ENCODE measurements at regions of chr10 and their contacts with region 1.

Region 1: DNA sequence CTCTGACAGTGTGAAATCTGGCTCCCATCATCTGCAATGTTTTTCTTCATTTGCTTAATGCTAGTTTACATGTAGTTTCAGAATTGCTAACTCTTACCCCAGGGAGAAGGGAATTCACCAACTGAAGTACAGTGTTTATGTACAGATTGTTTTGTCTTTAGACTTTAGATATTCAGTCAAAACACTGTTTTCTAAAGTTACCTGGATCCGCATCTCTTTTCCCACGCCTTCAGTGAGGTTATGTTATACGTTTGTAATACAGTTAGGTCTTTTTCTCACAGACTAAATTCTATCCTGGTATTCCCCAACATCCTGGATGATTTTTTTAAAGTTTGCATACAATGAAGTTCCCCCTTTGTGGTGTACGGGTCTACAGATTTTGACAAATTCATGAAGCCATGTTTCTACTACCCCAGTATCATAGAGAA is 3.2 kb upstream of the LYZL1 start:
- DNase-seq: no peak
- ATAC-seq: no peak
- H3K4me3 ChIP-seq: no peak overlapping the region
- H3K27ac ChIP-seq: no peak overlapping the region
- H3K4me1 ChIP-seq: no peaks in the 10 kb centered on the region
- H3K27me3 ChIP-seq: peaks cover 0 to 5% of the 10 kb centered on the region in 2 experiments; a peak in 3 of 5 replicates
- CTCF ChIP-seq: no peak
- EP300 ChIP-seq: no peak
- POLR2A ChIP-seq: no peak
- RAD21 ChIP-seq: no peak

Region 2: GRCh38 chr10:29229258-29229705 is 56.4 kb before region 1 on chr10:
- CTCF ChIA-PET with region 1: no interaction called
- POLR2A ChIA-PET with region 1: no interaction called
- in situ Hi-C with region 1: no loop called
- intact Hi-C with region 1: no loop called
- DNase-seq: peak; percentile 19 to 31 (median 28)
- ATAC-seq: peak; percentile 79
- H3K4me3 ChIP-seq: no peak overlapping the region
- H3K27ac ChIP-seq: no peak overlapping the region
- H3K4me1 ChIP-seq: peaks cover 0 to 7% of the 10 kb centered on the region in 2 experiments; a peak in 3 of 5 replicates
- H3K27me3 ChIP-seq: peaks cover 0 to 7% of the 10 kb centered on the region in 2 experiments; a peak in 2 of 5 replicates
- CTCF ChIP-seq: no peak
- EP300 ChIP-seq: no peak
- POLR2A ChIP-seq: no peak
- RAD21 ChIP-seq: no peak

Region 3: DNA sequence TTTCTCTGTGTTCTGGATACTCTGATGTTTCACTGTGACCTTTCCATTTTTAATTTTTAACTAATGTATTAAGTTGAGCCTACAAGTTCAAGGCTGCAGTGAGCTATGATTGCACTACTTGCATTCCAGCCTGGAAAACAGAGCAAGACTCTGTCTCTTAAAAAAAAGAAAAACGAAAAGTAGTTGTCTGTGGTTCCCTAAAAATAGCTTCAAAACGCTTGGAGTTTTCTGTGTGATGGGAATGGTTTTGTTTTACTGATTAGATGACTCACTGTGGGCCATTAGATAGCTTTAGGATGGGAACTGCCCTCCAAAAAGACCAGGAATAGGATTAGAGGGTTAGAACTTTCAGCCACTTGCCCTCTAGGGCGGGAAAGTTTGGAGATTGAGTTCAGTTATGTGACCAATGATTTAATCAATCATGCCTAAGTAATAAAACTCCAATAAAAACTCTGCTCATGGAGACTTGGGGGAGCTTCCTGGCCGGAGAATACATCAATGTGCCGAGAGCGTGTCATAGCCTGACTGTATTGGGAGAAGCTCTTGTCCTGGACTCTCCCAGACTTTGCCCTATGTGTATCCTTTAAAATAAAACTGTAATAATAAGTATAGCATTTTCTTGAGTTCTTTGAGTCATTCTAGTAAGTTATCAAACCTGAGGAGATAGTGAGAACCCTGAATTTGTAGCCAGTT is 150.3 kb after region 1 on chr10:
- CTCF ChIA-PET with region 1: no interaction called
- POLR2A ChIA-PET with region 1: no interaction called
- in situ Hi-C with region 1: no loop called
- intact Hi-C with region 1: no loop called
- DNase-seq: no peak
- ATAC-seq: no peak
- H3K4me3 ChIP-seq: no peak overlapping the region
- H3K27ac ChIP-seq: no peak overlapping the region
- H3K4me1 ChIP-seq: no peaks in the 10 kb centered on the region
- H3K27me3 ChIP-seq: no peaks in the 10 kb centered on the region
- CTCF ChIP-seq: no peak
- EP300 ChIP-seq: no peak
- POLR2A ChIP-seq: no peak
- RAD21 ChIP-seq: no peak

Region 4: GRCh38 chr10:30625080-30625479 is 1339.4 kb after region 1 on chr10:
- CTCF ChIA-PET with region 1: no interaction called
- POLR2A ChIA-PET with region 1: no interaction called
- in situ Hi-C with region 1: loop called (anchors 5 kb)
- intact Hi-C with region 1: no loop called
- DNase-seq: no peak
- ATAC-seq: no peak
- H3K4me3 ChIP-seq: no peak overlapping the region
- H3K27ac ChIP-seq: no peak overlapping the region
- H3K4me1 ChIP-seq: no peaks in the 10 kb centered on the region
- H3K27me3 ChIP-seq: peaks cover 11 to 42% of the 10 kb centered on the region in 2 experiments; a peak in 3 of 5 replicates
- CTCF ChIP-seq: no peak
- EP300 ChIP-seq: no peak
- POLR2A ChIP-seq: no peak
- RAD21 ChIP-seq: no peak